ENCODE measurements at regions of chr10 and their contacts with region 1.

Region 1: GRCh38 chr10:127715782-127716378 is 21.1 kb upstream of the FOXI2 start:
- DNase-seq: peak; percentile 17
- CTCF ChIP-seq: peak; percentile 46

Region 2: DNA sequence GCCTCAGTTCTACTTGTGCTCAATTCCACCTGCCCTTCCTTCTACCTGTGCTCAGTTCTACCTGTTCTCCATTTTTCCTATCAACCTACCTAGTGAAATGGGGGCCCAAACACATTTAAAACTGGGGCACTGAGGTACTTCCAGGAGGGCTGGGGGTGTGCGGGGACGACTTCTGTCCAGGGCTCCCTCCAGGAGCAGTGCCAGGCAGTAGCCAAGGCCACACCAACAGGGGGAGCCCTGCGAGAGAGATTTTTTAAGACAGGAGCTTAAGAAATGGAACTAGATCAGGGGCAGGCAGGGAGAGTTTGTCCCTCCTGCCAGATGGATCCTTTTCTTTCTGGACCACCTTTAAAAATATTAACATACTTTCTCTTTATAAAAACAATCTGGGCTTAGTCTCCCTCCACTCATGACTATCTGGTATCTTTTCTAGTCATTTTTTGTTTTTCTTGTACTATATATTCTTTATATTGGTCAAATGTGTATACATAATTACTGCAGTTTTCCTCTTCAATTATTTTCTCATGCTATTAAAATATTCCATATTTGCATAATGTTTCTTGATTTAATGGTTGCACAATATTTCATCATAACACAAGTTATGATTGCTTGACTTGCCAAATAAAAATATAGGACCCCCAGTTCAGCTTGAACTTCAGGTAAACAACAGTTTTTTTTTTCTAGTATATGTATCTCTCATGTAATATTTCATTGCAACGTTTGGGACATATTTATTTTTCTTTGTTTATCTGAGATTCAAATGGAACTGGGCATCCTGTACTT is 472.2 kb before region 1 on chr10:
- in situ Hi-C with region 1: no loop called
- DNase-seq: no peak
- CTCF ChIP-seq: peak; percentile 46

Region 3: GRCh38 chr10:128011175-128011979 is 295.5 kb after region 1 on chr10:
- in situ Hi-C with region 1: loop called (anchors 25 kb)
- DNase-seq: peak; percentile 90
- CTCF ChIP-seq: peak; percentile 98

Measured in GM13977 (cell line).